SK-N-SH (cell line): ENCODE measurements at regions of chr1 and their contacts with region 1.

Region 1: GRCh38 chr1:163315773-163316374 is 5.9 kb upstream of the NUF2 start:
- DNase-seq: peak; percentile 12
- H3K4me3 ChIP-seq: no peak overlapping the region; a peak in 1 of 4 replicates
- H3K27ac ChIP-seq: peak overlapping the region; percentile 5 to 55; a peak in 3 of 4 replicates
- H3K4me1 ChIP-seq: peaks cover 8 to 9% of the 10 kb centered on the region in 2 experiments; a peak in 3 of 4 replicates
- H3K27me3 ChIP-seq: no peaks in the 10 kb centered on the region
- CTCF ChIP-seq: peak; percentile 88
- EP300 ChIP-seq: no peak
- RAD21 ChIP-seq: peak; percentile 84

Region 2: GRCh38 chr1:162847839-162848453 is 467.9 kb before region 1 on chr1:
- CTCF ChIA-PET with region 1: interaction called, 85 read pairs
- POLR2A ChIA-PET with region 1: no interaction called
- DNase-seq: peak; percentile 61
- H3K4me3 ChIP-seq: peak overlapping the region in 1 of 2 experiments; percentile 21; a peak in 1 of 4 replicates
- H3K27ac ChIP-seq: no peak overlapping the region; a peak in 2 of 4 replicates
- H3K4me1 ChIP-seq: peaks cover 14 to 31% of the 10 kb centered on the region in 2 experiments
- H3K27me3 ChIP-seq: no peaks in the 10 kb centered on the region
- CTCF ChIP-seq: peak; percentile 98
- EP300 ChIP-seq: no peak; a peak in 1 of 4 replicates
- RAD21 ChIP-seq: peak; percentile 90

Region 3: GRCh38 chr1:162872981-162873380 is 442.9 kb before region 1 on chr1:
- CTCF ChIA-PET with region 1: interaction called, 51 read pairs
- POLR2A ChIA-PET with region 1: no interaction called
- DNase-seq: no peak
- H3K4me3 ChIP-seq: no peak overlapping the region
- H3K27ac ChIP-seq: peak overlapping the region in 1 of 2 experiments; percentile 94; a peak in 2 of 4 replicates
- H3K4me1 ChIP-seq: peaks cover 0 to 15% of the 10 kb centered on the region in 2 experiments; a peak in 2 of 4 replicates
- H3K27me3 ChIP-seq: no peaks in the 10 kb centered on the region
- CTCF ChIP-seq: no peak
- EP300 ChIP-seq: no peak
- RAD21 ChIP-seq: no peak

Region 4: GRCh38 chr1:162930976-162931560 is 384.8 kb before region 1 on chr1:
- CTCF ChIA-PET with region 1: interaction called, 13 read pairs
- POLR2A ChIA-PET with region 1: no interaction called
- DNase-seq: no peak
- H3K4me3 ChIP-seq: no peak overlapping the region
- H3K27ac ChIP-seq: peak overlapping the region; percentile 9 to 99; a peak in 3 of 4 replicates
- H3K4me1 ChIP-seq: peaks cover 0 to 53% of the 10 kb centered on the region in 2 experiments; a peak in 2 of 4 replicates
- H3K27me3 ChIP-seq: no peaks in the 10 kb centered on the region
- CTCF ChIP-seq: no peak
- EP300 ChIP-seq: peak in 1 of 2 experiments; percentile 34; a peak in 1 of 4 replicates
- RAD21 ChIP-seq: no peak

Region 5: DNA sequence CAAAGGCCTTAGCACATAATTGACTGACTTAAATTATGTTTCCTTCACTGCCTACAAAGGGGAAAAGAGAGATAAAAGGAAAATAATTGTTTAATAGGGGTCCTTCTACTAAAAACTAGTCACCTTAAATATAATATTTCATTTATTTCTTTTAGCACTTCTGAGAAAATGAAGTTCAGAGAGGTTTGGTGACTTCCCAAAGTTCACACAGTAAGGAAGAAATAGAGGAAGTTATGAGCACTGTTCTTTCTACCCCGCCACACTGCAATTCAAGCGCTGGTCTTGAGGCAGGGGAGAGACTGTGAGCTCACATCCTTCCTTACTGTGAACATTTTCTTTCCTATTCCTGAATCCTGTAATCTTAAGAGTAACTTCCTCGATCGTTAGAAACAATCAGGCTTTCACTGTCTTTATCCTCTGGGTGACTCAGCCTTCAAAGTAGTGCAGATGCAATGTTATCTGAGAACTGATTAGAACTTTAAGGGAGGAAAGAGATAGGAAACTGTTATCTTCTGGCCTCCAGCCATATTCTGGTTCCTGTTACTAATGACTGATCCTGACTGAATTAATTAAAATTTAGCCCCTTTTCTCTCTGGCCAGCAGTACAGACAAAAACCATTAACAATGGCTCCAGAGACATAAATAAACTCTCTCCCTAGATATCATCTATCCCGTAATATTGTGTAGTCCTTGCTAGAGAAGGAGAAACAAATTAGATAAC is 120.0 kb before region 1 on chr1:
- CTCF ChIA-PET with region 1: interaction called, 14 read pairs
- POLR2A ChIA-PET with region 1: interaction called, 15 read pairs
- DNase-seq: no peak
- H3K4me3 ChIP-seq: peak overlapping the region; percentile 47 to 62
- H3K27ac ChIP-seq: peak overlapping the region; percentile 79 to 99
- H3K4me1 ChIP-seq: peaks cover 5 to 56% of the 10 kb centered on the region in 2 experiments; a peak in 2 of 4 replicates
- H3K27me3 ChIP-seq: no peaks in the 10 kb centered on the region
- CTCF ChIP-seq: no peak
- EP300 ChIP-seq: peak; percentile 82 to 100
- RAD21 ChIP-seq: 0 out of 2 replicates have a peak, but pooled peaks have one; percentile 3

Region 6: GRCh38 chr1:163273766-163274441 is 42.0 kb before region 1 on chr1:
- CTCF ChIA-PET with region 1: interaction called, 10 read pairs
- POLR2A ChIA-PET with region 1: no interaction called
- DNase-seq: no peak
- H3K4me3 ChIP-seq: no peak overlapping the region
- H3K27ac ChIP-seq: no peak overlapping the region
- H3K4me1 ChIP-seq: no peaks in the 10 kb centered on the region
- H3K27me3 ChIP-seq: no peaks in the 10 kb centered on the region
- CTCF ChIP-seq: no peak
- EP300 ChIP-seq: no peak
- RAD21 ChIP-seq: no peak

Region 7: DNA sequence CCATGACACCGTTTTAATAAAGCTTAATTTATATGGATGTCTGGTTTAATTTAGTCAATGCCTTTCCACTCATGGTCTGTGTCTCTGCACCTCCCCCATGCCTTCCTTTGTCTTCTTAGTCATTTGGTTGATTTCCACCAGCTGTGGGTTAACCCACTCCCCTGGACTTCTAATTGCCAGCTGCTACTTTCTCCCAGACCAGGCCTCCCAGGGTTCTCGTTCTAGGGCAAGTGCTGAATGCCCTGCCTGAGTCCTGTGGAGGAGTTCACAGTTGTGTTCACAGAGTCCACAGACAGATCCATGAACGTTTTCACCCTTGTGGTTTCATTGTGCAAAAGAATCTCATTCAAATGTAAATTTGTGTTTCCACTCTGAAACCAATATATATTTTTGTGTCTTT is 249.3 kb after region 1 on chr1:
- CTCF ChIA-PET with region 1: no interaction called
- POLR2A ChIA-PET with region 1: no interaction called
- DNase-seq: no peak
- H3K4me3 ChIP-seq: no peak overlapping the region
- H3K27ac ChIP-seq: no peak overlapping the region
- H3K4me1 ChIP-seq: peaks cover 0 to 4% of the 10 kb centered on the region in 2 experiments; a peak in 2 of 4 replicates
- H3K27me3 ChIP-seq: no peaks in the 10 kb centered on the region
- CTCF ChIP-seq: no peak
- EP300 ChIP-seq: no peak
- RAD21 ChIP-seq: no peak